ENCODE measurements at regions of chr14 and their contacts with region 1.

Region 1: GRCh38 chr14:31026395-31027118 is 378 bp upstream of the STRN3 start:
- DNase-seq: peak; percentile 95
- H3K4me3 Mint-ChIP-seq: peak overlapping the region; percentile 92
- H3K27ac Mint-ChIP-seq: peak overlapping the region; percentile 91
- H3K4me1 Mint-ChIP-seq: peaks cover 56% of the 10 kb centered on the region
- H3K27me3 Mint-ChIP-seq: no peaks in the 10 kb centered on the region

Region 2: DNA sequence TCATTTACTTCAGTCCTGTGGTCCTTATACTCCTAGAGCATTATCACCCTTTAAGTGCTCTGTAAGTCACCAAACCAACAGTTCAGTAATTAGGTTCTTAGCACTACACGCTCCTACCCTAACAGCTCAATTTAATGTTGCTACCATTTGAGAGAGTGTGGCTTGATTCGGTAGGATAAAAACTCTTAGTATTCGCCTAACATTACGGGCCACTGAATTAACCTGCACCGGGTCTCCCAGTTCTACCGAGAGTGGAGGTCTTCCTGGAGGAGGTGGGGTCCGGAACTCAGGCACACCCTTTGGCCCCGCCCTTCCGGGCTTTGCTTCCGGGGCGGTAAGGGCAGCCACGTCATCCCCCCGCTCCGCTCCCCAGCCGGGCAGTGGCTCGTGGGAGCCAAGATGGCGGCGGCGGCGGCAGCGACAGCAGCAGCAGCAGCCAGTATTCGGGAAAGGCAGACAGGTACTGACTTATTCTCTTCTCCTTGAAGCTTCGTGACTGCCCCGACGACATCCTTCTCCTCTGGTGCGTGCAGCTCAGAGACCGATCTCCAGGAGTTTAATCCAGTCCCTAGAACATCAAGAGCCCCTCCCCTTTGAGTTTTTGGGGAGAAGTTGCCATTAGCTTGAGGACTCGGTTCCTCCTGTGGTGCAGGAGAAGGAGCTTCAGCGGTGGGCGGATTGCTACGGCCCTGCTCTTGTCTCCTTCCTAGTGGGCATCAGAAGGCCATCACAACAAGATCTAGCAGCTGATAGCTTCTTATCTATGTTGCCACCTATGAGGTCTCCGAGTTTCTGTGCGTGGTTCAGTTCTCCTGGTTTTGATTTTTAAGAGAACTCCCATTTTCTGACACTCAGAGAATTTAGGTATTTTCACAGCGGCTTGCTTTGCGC is 404.4 kb before region 1 on chr14 and contains the start of gene SCFD1:
- CTCF ChIA-PET with region 1: no interaction called
- POLR2A ChIA-PET with region 1: no interaction called
- intact Hi-C with region 1: loop called (anchors 1 kb)
- DNase-seq: peak; percentile 96
- H3K4me3 Mint-ChIP-seq: peak within 1 kb of the TSS; percentile 83
- H3K27ac Mint-ChIP-seq: peak within 1 kb of the TSS; percentile 85
- H3K4me1 Mint-ChIP-seq: peaks cover 36% of the 10 kb centered on the region
- H3K27me3 Mint-ChIP-seq: no peaks in the 10 kb centered on the region
- total RNA-seq, gene SCFD1: 52.6 to 56.5 TPM

Region 3: GRCh38 chr14:30840086-30840779 is 186.3 kb before region 1 on chr14:
- CTCF ChIA-PET with region 1: no interaction called
- POLR2A ChIA-PET with region 1: no interaction called
- intact Hi-C with region 1: no loop called
- DNase-seq: no peak
- H3K4me3 Mint-ChIP-seq: no peak overlapping the region
- H3K27ac Mint-ChIP-seq: no peak overlapping the region
- H3K4me1 Mint-ChIP-seq: no peaks in the 10 kb centered on the region
- H3K27me3 Mint-ChIP-seq: no peaks in the 10 kb centered on the region

Region 4: DNA sequence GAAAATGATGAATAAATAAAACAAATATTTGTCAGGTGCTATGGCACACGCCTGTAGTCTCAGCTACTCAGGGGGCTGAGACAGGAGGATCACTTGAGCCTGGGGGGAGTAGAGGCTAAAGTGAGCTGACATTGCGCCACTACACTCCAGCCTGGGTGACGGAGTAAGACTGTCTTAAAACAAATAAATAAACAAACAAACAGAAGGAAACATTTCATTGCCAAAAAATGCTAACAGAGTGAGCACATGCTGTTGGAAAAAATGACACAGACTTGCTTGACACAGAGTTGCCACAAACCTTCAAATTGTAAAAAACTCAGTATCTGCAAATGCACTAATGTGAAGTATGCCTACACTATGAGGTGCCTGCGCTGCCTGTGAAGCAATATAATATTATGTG is 51.9 kb before region 1 on chr14:
- CTCF ChIA-PET with region 1: no interaction called
- POLR2A ChIA-PET with region 1: interaction called, 6 read pairs
- intact Hi-C with region 1: loop called (anchors 10 kb)
- DNase-seq: no peak
- H3K4me3 Mint-ChIP-seq: no peak overlapping the region
- H3K27ac Mint-ChIP-seq: no peak overlapping the region
- H3K4me1 Mint-ChIP-seq: peaks cover 44% of the 10 kb centered on the region
- H3K27me3 Mint-ChIP-seq: no peaks in the 10 kb centered on the region

Region 5: DNA sequence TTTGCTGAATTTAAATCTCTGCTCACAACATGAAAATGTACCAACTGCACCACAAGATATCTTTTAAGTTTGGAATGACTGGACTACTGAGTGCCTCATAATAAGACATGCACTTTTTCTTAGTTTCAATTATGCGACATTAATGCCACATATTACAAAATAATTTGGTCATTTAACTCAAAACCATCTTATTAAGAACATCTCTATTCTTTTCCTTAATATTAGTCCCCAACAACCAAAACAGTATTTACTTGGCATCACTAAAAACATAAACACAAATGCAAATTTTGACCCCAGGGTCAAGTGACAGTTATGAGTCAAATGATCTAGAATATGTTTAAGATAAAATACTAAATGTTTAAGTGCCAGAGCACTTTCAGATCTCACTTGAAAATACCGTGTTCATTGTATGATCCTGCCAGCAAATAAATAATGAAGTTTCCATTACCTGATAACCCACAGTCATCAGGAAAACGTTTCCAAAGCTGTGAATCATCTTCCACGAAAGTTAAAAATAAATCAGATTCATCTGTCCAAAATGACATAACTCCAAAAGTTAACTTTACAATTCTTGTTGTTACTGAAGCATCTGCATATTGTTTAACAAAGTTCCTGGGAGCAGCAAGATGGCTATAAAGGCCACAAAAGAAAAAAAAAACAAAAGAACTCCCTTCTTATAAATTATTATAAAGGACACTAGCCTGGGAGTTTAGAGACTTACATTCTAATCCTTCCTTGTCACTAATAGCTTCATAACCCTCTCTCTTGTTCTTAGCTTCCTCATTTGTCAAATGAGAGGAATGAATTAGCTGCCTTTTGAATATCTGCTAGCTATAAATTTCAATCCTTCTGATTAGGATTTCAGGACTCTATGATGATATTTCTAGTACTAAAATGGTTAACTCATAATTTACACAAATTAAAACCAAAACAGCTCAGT is 31.6 kb before region 1 on chr14:
- CTCF ChIA-PET with region 1: no interaction called
- POLR2A ChIA-PET with region 1: interaction called, 3 read pairs
- intact Hi-C with region 1: loop called (anchors 1 kb)
- DNase-seq: no peak
- H3K4me3 Mint-ChIP-seq: no peak overlapping the region
- H3K27ac Mint-ChIP-seq: peak overlapping the region; percentile 52
- H3K4me1 Mint-ChIP-seq: peaks cover 44% of the 10 kb centered on the region
- H3K27me3 Mint-ChIP-seq: no peaks in the 10 kb centered on the region

Region 6: GRCh38 chr14:31084385-31084784 is 57.8 kb after region 1 on chr14:
- CTCF ChIA-PET with region 1: interaction called, 3 read pairs
- POLR2A ChIA-PET with region 1: no interaction called
- intact Hi-C with region 1: loop called (anchors 1 kb)
- DNase-seq: no peak
- H3K4me3 Mint-ChIP-seq: no peak overlapping the region
- H3K27ac Mint-ChIP-seq: no peak overlapping the region
- H3K4me1 Mint-ChIP-seq: no peaks in the 10 kb centered on the region
- H3K27me3 Mint-ChIP-seq: no peaks in the 10 kb centered on the region

Region 7: DNA sequence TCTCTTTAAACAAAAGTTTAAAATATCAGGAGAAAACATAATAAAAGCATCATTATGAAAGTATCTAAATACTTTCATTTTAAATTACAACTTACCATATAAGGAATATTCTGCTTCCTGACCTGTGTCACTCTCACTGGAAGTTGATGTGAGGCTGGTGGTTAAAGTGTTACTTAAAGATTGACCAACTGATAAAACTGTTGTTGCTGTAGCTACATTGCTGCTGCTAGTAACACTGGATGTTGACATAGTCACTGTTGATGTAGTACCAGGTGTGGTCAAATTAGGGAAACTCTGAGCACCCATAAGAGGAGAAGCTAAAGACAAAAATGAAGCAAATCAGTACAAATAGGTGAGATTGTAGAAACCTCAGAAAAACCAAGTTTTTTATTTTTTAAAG is 101.1 kb after region 1 on chr14:
- CTCF ChIA-PET with region 1: no interaction called
- POLR2A ChIA-PET with region 1: no interaction called
- intact Hi-C with region 1: loop called (anchors 5 kb)
- DNase-seq: peak; percentile 14
- H3K4me3 Mint-ChIP-seq: no peak overlapping the region
- H3K27ac Mint-ChIP-seq: peak overlapping the region; percentile 55
- H3K4me1 Mint-ChIP-seq: peaks cover 33% of the 10 kb centered on the region
- H3K27me3 Mint-ChIP-seq: no peaks in the 10 kb centered on the region

Region 8: GRCh38 chr14:31456841-31457664 is 430.5 kb after region 1 on chr14 and contains the start of gene DTD2:
- CTCF ChIA-PET with region 1: no interaction called
- POLR2A ChIA-PET with region 1: no interaction called
- intact Hi-C with region 1: loop called (anchors 1 kb)
- DNase-seq: peak; percentile 94
- H3K4me3 Mint-ChIP-seq: peak within 1 kb of the TSS; percentile 95
- H3K27ac Mint-ChIP-seq: peak within 1 kb of the TSS; percentile 79
- H3K4me1 Mint-ChIP-seq: peaks cover 25% of the 10 kb centered on the region
- H3K27me3 Mint-ChIP-seq: no peaks in the 10 kb centered on the region
- total RNA-seq, gene DTD2: 19.1 to 20.2 TPM